Caco-2 (cell line): ENCODE measurements at regions of chr2 and their contacts with region 1.

Region 1: DNA sequence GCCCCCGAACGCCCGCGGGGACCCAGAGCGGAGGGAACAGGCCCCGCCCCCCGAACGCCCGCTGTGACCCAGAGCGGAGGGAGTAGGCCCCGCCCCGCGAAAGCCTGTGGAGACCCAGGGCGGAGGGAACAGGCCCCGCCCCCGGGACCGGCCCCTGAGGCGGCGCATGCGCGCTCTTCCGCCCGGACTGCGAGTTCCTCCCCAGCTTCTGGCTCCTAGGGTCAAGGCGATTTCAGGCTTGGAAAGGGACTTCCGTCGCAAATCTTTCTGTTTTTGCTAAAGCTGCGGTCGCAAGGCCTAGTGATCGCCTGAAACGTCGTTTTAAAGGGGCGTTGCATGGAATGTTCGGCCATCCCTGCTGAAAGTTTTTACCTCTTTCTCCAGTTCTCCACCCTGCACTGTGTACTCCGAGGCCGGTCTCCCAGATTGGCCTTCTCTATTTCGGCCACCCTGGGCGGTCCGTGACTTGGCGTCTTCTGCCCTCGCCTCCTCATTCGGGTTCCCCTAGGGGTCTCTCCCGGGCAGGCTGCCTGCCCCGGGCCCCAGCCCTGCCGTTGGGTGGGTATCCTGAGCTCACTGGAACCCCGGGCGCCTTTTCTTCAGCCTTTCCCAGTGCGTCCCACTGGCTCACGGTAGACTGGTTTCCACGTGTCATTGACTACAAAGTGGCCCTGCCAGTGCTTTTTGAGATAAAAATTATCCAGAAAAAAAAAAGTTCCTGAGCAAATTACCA is 372 bp upstream of the WDSUB1 start:
- DNase-seq: peak; percentile 99 to 100
- H3K4me3 ChIP-seq: peak overlapping the region; percentile 50
- H3K4me3 Mint-ChIP-seq: peak overlapping the region; percentile 89
- H3K27ac Mint-ChIP-seq: peak overlapping the region; percentile 78
- H3K4me1 ChIP-seq: peaks cover 13% of the 10 kb centered on the region
- H3K4me1 Mint-ChIP-seq: peaks cover 22% of the 10 kb centered on the region
- H3K27me3 ChIP-seq: no peaks in the 10 kb centered on the region
- H3K27me3 Mint-ChIP-seq: no peaks in the 10 kb centered on the region
- CTCF ChIP-seq: peak in 1 of 2 experiments; percentile 18

Region 2: GRCh38 chr2:159175182-159175581 is 111.7 kb before region 1 on chr2:
- CTCF ChIA-PET with region 1: no interaction called
- POLR2A ChIA-PET with region 1: no interaction called
- intact Hi-C with region 1: no loop called
- DNase-seq: no peak
- H3K4me3 ChIP-seq: no peak overlapping the region
- H3K4me3 Mint-ChIP-seq: no peak overlapping the region
- H3K27ac Mint-ChIP-seq: no peak overlapping the region
- H3K4me1 ChIP-seq: peaks cover 10% of the 10 kb centered on the region
- H3K4me1 Mint-ChIP-seq: peaks cover 6% of the 10 kb centered on the region
- H3K27me3 ChIP-seq: no peaks in the 10 kb centered on the region
- H3K27me3 Mint-ChIP-seq: no peaks in the 10 kb centered on the region
- CTCF ChIP-seq: no peak

Region 3: GRCh38 chr2:159249984-159250715 is 36.7 kb before region 1 on chr2:
- CTCF ChIA-PET with region 1: no interaction called
- POLR2A ChIA-PET with region 1: no interaction called
- intact Hi-C with region 1: no loop called
- DNase-seq: peak; percentile 14 to 44
- H3K4me3 ChIP-seq: no peak overlapping the region
- H3K4me3 Mint-ChIP-seq: no peak overlapping the region
- H3K27ac Mint-ChIP-seq: no peak overlapping the region
- H3K4me1 ChIP-seq: no peaks in the 10 kb centered on the region
- H3K4me1 Mint-ChIP-seq: no peaks in the 10 kb centered on the region
- H3K27me3 ChIP-seq: no peaks in the 10 kb centered on the region
- H3K27me3 Mint-ChIP-seq: no peaks in the 10 kb centered on the region
- CTCF ChIP-seq: no peak

Region 4: GRCh38 chr2:159272156-159272555 is 14.7 kb before region 1 on chr2:
- CTCF ChIA-PET with region 1: interaction called, 7 read pairs
- POLR2A ChIA-PET with region 1: interaction called, 10 read pairs
- intact Hi-C with region 1: loop called (anchors 1 kb)
- DNase-seq: peak; percentile 68 to 78
- H3K4me3 ChIP-seq: no peak overlapping the region
- H3K4me3 Mint-ChIP-seq: peak overlapping the region; percentile 73
- H3K27ac Mint-ChIP-seq: peak overlapping the region; percentile 95
- H3K4me1 ChIP-seq: peaks cover 14% of the 10 kb centered on the region
- H3K4me1 Mint-ChIP-seq: peaks cover 43% of the 10 kb centered on the region
- H3K27me3 ChIP-seq: no peaks in the 10 kb centered on the region
- H3K27me3 Mint-ChIP-seq: no peaks in the 10 kb centered on the region
- CTCF ChIP-seq: no peak

Region 5: GRCh38 chr2:159562248-159562647 is 275.4 kb after region 1 on chr2:
- CTCF ChIA-PET with region 1: no interaction called
- POLR2A ChIA-PET with region 1: no interaction called
- intact Hi-C with region 1: no loop called
- DNase-seq: no peak
- H3K4me3 ChIP-seq: no peak overlapping the region
- H3K4me3 Mint-ChIP-seq: no peak overlapping the region
- H3K27ac Mint-ChIP-seq: no peak overlapping the region
- H3K4me1 ChIP-seq: no peaks in the 10 kb centered on the region
- H3K4me1 Mint-ChIP-seq: peaks cover 8% of the 10 kb centered on the region
- H3K27me3 ChIP-seq: no peaks in the 10 kb centered on the region
- H3K27me3 Mint-ChIP-seq: no peaks in the 10 kb centered on the region
- CTCF ChIP-seq: no peak

Region 6: DNA sequence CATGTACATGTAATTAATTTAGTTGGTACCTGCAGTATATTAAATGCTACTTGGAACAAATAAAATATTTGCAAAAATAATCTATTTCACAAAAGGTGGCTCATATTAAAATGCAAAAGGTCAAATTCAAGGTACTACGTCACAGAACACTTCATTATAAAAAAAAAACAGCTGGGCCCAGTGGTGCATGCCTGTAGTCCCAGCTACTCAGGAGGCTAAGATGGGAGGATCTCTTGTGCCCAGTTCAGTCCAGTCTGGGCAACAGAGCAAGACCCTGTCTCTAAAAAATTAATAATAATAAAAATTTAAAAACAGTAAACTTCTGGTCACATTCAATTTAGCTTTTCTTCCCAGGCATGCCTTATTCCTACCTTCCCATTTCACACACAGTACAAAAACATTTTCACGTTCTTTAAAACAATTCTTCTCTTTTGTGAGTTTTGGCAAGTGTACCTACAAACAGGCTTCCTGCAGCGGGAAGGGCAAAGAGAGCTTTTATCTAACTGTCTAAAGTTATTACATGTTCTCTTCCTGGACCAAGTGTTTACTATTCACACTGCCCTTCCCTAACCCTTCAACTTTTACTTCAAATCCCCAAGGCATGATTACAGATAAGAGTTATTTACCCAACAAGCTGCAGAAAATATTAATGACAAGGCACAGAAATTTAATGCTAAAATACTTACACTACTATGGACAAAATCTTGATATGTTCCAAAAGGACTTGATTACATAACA is 318.7 kb after region 1 on chr2:
- CTCF ChIA-PET with region 1: no interaction called
- POLR2A ChIA-PET with region 1: no interaction called
- intact Hi-C with region 1: no loop called
- DNase-seq: no peak
- H3K4me3 ChIP-seq: no peak overlapping the region
- H3K4me3 Mint-ChIP-seq: peak overlapping the region; percentile 34
- H3K27ac Mint-ChIP-seq: peak overlapping the region; percentile 52
- H3K4me1 ChIP-seq: peaks cover 46% of the 10 kb centered on the region
- H3K4me1 Mint-ChIP-seq: peaks cover 39% of the 10 kb centered on the region
- H3K27me3 ChIP-seq: no peaks in the 10 kb centered on the region
- H3K27me3 Mint-ChIP-seq: no peaks in the 10 kb centered on the region
- CTCF ChIP-seq: no peak

Region 7: GRCh38 chr2:159712143-159712928 is 425.5 kb after region 1 on chr2 and contains the start of gene MARCHF7:
- CTCF ChIA-PET with region 1: no interaction called
- POLR2A ChIA-PET with region 1: no interaction called
- intact Hi-C with region 1: loop called (anchors 5 kb)
- DNase-seq: peak; percentile 98 to 99
- H3K4me3 ChIP-seq: peak within 1 kb of the TSS; percentile 100
- H3K4me3 Mint-ChIP-seq: peak within 1 kb of the TSS; percentile 98
- H3K27ac Mint-ChIP-seq: peak within 1 kb of the TSS; percentile 99
- H3K4me1 ChIP-seq: peaks cover 19% of the 10 kb centered on the region
- H3K4me1 Mint-ChIP-seq: peaks cover 18% of the 10 kb centered on the region
- H3K27me3 ChIP-seq: no peaks in the 10 kb centered on the region
- H3K27me3 Mint-ChIP-seq: no peaks in the 10 kb centered on the region
- CTCF ChIP-seq: peak in 1 of 2 experiments; percentile 66
- total RNA-seq, gene MARCHF7: 82.6 and 90.7 TPM in 2 replicates